ENCODE measurements at regions of chr1 and their contacts with region 1.

Region 1: DNA sequence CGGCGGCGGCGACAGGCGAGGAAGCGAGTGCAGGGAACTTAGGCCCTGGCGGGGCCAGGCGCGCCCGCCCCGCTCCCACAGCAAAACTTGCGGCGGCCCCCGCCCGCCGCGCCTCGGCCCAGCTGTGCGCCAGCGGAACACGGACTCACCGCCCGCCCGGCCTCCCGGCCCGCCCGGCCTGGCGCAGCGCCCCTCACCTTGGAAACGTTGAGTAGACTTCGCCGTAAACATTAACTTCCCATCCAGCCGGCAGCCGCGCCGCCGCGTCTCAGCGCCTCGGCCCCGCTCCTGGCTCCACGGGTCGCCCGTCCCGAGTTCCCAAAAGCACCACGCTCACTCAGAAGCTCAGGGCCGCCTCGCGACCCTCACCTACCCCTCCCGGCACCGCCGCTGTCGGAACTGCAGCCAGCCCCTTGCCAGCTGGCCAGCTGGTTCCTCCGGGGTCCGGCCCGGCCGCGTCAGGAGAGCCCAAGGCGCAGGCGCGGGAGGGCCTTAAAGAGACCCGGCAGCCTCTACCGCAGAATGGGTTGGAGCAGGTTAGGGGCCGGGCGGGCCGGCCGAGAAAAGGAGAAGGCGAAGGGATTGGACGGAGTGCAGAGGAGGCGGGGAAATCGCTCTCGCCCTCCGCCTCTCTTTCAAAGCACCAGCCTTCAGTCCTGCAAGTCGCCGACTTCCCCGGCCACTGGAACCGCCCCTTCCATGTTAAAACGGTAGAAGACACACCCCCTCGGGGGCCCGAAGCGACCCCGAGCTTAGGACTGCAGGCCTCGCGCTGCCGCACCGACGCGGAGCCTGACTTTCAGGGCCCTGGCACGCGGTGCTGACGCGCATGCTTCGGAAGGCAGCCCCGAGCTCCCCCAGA is at the start of gene EVI5:
- DNase-seq: peak; percentile 97
- ATAC-seq: peak; percentile 93
- H3K4me3 ChIP-seq: peak within 1 kb of the TSS; percentile 94
- H3K27ac ChIP-seq: peak within 1 kb of the TSS; percentile 49
- H3K4me1 ChIP-seq: peaks cover 11% of the 10 kb centered on the region
- H3K27me3 ChIP-seq: no peaks in the 10 kb centered on the region
- CTCF ChIP-seq: no peak
- total RNA-seq, gene EVI5: 38.2 and 65.5 TPM in 2 replicates

Region 2: DNA sequence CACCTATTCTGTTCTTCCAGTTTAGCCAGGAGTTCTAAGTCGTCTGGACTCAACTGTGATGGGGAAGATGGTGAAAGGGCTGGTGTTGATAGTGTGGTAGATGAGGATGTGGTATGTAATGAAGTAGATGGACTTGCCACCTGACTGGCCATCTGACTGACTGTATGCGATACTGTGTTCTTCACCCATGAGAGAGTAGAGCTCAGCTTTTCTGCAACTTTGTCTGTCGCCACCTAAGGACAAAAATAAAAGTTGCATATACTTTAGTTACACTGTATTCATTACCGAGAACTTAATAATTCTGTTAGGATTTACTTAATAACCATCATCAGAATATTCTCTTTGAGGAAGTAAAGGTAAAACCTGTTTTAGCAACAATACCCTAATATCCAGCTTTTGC is 48.5 kb before region 1 on chr1:
- CTCF ChIA-PET with region 1: no interaction called
- POLR2A ChIA-PET with region 1: no interaction called
- intact Hi-C with region 1: no loop called
- DNase-seq: peak; percentile 37
- ATAC-seq: peak; percentile 81
- H3K4me3 ChIP-seq: no peak overlapping the region
- H3K27ac ChIP-seq: no peak overlapping the region
- H3K4me1 ChIP-seq: no peaks in the 10 kb centered on the region
- H3K27me3 ChIP-seq: no peaks in the 10 kb centered on the region
- CTCF ChIP-seq: peak; percentile 64

Region 3: DNA sequence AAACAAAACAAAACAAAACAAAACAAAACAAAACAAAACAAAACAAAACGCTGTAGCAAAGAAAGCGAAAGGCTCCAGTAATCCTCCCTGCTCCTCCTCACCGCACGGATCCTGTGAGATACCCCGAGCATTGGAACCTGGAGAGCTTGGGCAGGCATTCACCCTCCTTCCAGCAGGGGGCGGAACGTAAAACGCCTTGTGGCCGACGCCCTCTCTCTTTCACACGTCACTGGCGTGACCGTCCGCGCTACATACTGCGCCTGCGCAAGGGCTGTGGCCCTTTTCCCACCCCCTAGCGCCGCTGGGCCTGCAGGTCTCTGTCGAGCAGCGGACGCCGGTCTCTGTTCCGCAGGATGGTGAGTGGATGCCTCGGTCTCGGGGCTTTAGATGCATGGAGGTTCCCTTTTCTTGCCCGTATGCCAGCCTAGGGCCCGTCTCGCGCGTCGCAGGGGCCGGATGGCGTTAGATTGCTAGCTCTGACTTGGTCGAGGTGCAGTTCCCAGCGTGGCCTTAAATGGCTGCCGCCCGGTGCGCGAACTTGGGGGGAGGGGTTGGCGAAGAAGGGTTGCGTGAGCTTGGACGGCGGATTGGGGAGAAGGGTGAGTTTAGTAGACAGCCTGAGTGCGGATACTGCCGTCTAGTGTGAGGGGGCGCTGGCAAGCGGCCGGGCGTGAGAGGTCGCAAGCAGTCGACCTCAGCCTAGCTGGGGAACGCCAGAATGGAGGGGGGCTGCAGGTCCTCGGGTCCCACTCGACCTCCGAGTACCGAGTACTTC is 47.1 kb after region 1 on chr1 and contains the start of gene RPL5:
- CTCF ChIA-PET with region 1: interaction called, 7 read pairs
- POLR2A ChIA-PET with region 1: interaction called, 3 read pairs
- intact Hi-C with region 1: loop called (anchors 2 kb)
- DNase-seq: peak; percentile 98
- ATAC-seq: peak; percentile 93
- H3K4me3 ChIP-seq: peak within 1 kb of the TSS; percentile 98
- H3K27ac ChIP-seq: peak within 1 kb of the TSS; percentile 48
- H3K4me1 ChIP-seq: peaks cover 20% of the 10 kb centered on the region
- H3K27me3 ChIP-seq: no peaks in the 10 kb centered on the region
- CTCF ChIP-seq: peak; percentile 89
- total RNA-seq, gene RPL5: 1,246 and 1,285 TPM in 2 replicates

Region 4: GRCh38 chr1:92854101-92854785 is 69.4 kb after region 1 on chr1:
- CTCF ChIA-PET with region 1: no interaction called
- POLR2A ChIA-PET with region 1: no interaction called
- intact Hi-C with region 1: no loop called
- DNase-seq: no peak
- ATAC-seq: no peak
- H3K4me3 ChIP-seq: no peak overlapping the region
- H3K27ac ChIP-seq: no peak overlapping the region
- H3K4me1 ChIP-seq: peaks cover 2% of the 10 kb centered on the region; the same call in 1 of the 2 replicates
- H3K27me3 ChIP-seq: no peaks in the 10 kb centered on the region
- CTCF ChIP-seq: no peak

Measured in PC-3 (cell line).